ENCODE measurements at regions of chr1 and their contacts with region 1.

Region 1: GRCh38 chr1:78676347-78676982 is 26.8 kb downstream of the IFI44 start:
- DNase-seq: peak; percentile 40
- ATAC-seq: peak; percentile 63
- H3K4me3 ChIP-seq: no peak overlapping the region
- H3K27ac ChIP-seq: no peak overlapping the region
- H3K4me1 ChIP-seq: no peaks in the 10 kb centered on the region
- H3K27me3 ChIP-seq: no peaks in the 10 kb centered on the region
- CTCF ChIP-seq: peak; percentile 62 to 83 (median 72); a peak in 5 of 6 replicates
- POLR2A ChIP-seq: no peak
- RAD21 ChIP-seq: peak; percentile 75

Region 2: GRCh38 chr1:78126506-78126905 is 550.0 kb before region 1 on chr1:
- CTCF ChIA-PET with region 1: no interaction called
- POLR2A ChIA-PET with region 1: no interaction called
- RAD21 ChIA-PET with region 1: no interaction called
- intact Hi-C with region 1: loop called (anchors 1 kb)
- DNase-seq: no peak
- ATAC-seq: no peak
- H3K4me3 ChIP-seq: no peak overlapping the region
- H3K27ac ChIP-seq: no peak overlapping the region
- H3K4me1 ChIP-seq: no peaks in the 10 kb centered on the region
- H3K27me3 ChIP-seq: no peaks in the 10 kb centered on the region
- CTCF ChIP-seq: no peak
- POLR2A ChIP-seq: no peak
- RAD21 ChIP-seq: no peak

Region 3: DNA sequence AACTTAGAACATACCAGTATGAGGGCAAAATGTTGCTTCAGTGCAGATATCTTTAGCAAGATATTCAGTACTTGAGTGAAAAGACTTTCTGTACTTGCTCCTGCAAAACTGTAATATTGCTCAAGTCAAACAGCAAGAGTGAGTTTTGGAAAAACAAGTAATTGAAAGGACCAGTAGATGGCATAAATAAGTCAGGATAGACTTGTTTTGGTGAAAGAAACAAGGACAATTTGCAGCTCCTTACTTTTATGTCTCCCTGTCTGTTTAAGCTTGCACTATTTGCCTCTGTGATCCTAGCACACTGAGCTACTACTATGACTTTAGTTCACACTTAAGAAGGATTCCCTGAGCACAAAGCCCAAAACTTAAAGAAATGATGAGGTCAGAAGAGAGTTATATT is 12.2 kb after region 1 on chr1:
- CTCF ChIA-PET with region 1: no interaction called
- POLR2A ChIA-PET with region 1: no interaction called
- RAD21 ChIA-PET with region 1: no interaction called
- intact Hi-C with region 1: no loop called
- DNase-seq: no peak
- ATAC-seq: no peak
- H3K4me3 ChIP-seq: no peak overlapping the region
- H3K27ac ChIP-seq: no peak overlapping the region
- H3K4me1 ChIP-seq: no peaks in the 10 kb centered on the region
- H3K27me3 ChIP-seq: no peaks in the 10 kb centered on the region
- CTCF ChIP-seq: peak in 1 of 3 experiments; percentile 27; a peak in 1 of 6 replicates
- POLR2A ChIP-seq: no peak
- RAD21 ChIP-seq: peak; percentile 49